MCF 10A (cell line): ENCODE measurements at regions of chr1 and their contacts with region 1.

Region 1: DNA sequence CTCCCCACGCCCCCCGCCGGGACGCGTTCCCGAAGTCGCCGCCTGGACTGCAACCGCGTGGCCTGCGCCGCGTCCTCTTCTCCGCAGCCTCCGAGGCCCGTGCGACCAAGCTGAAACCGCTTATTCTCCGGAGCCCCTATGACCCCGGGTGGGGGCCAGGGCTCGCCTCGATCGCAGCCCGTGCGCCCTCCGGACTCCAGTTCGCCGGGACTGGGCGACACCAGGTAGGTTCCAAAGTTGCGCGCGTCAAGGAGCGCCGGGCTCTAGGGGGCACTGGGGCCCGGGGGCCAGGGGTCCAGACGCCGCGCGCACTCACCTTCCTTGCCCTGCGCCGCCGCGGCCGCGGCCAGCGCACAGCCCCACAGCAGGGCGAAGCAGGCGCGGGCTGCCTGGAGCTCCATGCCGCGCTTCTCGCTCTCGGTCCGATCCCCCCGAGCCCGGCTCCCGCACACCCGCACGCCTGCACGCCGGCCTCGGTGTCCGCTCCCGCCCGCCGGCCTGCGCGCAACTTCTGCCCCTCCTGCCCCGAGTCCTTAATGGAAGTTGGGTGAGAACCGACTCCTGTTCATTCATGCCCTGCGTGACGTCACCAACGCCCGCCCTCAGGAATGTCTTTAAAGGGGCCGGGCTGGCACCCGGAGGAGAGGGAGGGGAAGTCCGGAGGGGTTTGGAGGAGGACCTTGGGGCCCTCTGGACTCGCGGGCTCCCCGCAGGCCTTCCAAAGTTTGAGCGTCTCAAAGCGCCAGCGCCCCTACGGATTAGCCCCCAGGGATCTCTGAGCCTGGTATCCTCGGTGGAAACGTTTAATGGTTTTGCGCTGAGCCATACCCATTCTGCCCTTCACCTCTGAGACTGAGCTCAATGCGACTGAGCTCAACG is at the start of gene EPHA2:
- DNase-seq: peak; percentile 96
- H3K4me3 Mint-ChIP-seq: peak within 1 kb of the TSS; percentile 87
- H3K27ac Mint-ChIP-seq: peak within 1 kb of the TSS; percentile 63
- H3K4me1 Mint-ChIP-seq: peaks cover 42% of the 10 kb centered on the region
- H3K27me3 Mint-ChIP-seq: no peaks in the 10 kb centered on the region
- CTCF ChIP-seq: no peak
- total RNA-seq, gene EPHA2: 206 and 248 TPM in 2 replicates

Region 2: DNA sequence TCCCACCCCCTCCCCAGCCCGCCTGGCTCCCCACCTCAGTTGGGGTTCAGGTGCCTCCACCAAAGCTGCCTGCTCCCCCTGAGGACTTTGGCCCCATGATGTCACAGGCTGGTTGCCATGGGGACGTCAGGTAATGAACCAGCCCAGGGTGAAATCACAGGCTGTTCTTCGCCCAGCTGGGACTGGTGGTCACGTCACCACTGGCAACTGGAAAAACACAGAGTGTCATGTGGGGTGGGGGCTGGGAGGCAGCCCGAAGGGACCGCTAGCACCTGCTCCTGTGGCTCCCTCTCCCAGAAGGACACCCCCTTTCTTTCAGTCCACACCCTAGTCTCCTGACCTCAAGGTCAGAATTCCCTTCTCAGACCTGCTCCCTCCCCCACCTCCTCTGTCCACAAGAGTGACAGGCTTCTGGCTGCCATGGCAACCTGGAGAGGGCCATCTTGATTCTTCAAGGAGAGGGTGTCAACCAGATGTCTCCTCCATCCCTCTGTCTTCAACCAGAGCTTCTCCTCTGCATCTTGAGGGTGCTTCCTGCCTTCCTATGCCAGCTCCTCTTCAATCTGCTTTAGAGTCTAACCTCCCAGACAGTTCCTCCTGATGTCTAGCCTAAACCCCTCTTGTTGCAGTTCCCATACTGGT is 88.5 kb before region 1 on chr1:
- CTCF ChIA-PET with region 1: no interaction called
- POLR2A ChIA-PET with region 1: no interaction called
- intact Hi-C with region 1: no loop called
- DNase-seq: no peak
- H3K4me3 Mint-ChIP-seq: no peak overlapping the region
- H3K27ac Mint-ChIP-seq: peak overlapping the region; percentile 39
- H3K4me1 Mint-ChIP-seq: peaks cover 6% of the 10 kb centered on the region
- H3K27me3 Mint-ChIP-seq: peaks cover 16% of the 10 kb centered on the region
- CTCF ChIP-seq: no peak

Region 3: DNA sequence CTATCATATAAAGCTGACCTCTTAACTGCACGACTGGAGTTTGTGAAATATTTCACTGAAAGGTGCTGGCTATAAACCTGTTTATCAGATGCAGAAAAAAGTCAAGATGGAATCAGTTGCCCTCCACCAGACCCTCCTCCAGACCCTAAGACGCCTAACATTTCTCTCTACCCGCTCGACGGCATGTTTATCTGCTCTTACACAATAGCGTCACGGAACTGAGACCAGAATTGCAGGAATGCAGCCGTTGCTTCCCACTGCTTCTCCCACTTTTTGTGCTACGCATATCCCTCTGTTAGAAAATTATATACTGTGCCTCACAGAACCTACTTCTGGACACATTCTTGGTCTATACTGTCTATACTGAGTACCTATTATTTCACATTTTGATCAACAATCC is 54.1 kb before region 1 on chr1:
- CTCF ChIA-PET with region 1: no interaction called
- POLR2A ChIA-PET with region 1: interaction called, 10 read pairs
- intact Hi-C with region 1: no loop called
- DNase-seq: no peak
- H3K4me3 Mint-ChIP-seq: no peak overlapping the region
- H3K27ac Mint-ChIP-seq: no peak overlapping the region
- H3K4me1 Mint-ChIP-seq: no peaks in the 10 kb centered on the region
- H3K27me3 Mint-ChIP-seq: peaks cover 4% of the 10 kb centered on the region
- CTCF ChIP-seq: no peak

Region 4: DNA sequence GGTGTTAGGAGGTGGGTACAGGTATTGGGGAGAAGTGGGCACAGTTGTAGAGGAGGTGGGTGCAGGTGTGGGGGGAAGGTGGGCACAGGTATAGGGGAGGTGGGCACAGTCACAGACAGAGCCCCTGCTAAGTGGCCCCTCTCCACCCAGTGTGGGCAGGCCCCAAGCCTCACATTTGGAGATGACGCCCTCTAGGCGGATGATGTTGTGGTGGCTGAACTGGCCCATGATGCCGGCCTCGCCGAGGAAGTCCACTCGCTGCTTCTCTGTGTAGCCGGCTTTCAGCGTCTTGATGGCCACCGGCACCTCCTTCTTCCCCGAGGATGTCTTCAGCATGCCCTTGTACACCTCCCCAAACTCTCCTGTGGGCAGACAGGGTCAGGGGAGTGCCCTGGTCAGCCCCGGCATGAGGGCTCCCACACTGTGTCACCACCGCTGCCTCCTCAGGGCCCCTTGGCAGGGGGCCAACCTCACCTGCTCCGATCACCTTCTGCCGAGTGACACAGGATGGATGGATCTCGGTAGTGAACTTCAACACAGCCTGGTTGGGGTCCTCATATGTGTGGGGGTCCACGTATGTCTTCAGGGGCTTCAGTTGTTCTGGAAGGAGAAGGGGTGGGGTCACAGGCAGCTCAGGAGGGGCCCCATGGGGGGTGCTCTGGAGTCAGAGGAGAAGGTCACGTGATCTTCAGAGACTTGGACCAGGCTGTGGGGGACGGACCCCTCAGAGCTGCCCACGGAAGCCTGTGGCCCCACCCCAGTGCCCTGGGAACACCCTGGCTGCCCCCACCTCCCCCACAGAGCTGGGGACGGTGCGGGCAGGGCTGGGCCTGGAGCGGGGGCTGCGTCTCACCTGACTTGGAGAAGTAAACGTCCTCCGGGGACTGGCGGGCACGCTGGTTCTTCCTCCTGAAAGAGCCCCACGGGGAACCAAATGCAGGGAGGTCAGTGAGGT is 22.5 kb before region 1 on chr1:
- CTCF ChIA-PET with region 1: interaction called, 10 read pairs
- POLR2A ChIA-PET with region 1: interaction called, 35 read pairs
- intact Hi-C with region 1: no loop called
- DNase-seq: no peak
- H3K4me3 Mint-ChIP-seq: no peak overlapping the region
- H3K27ac Mint-ChIP-seq: no peak overlapping the region
- H3K4me1 Mint-ChIP-seq: peaks cover 9% of the 10 kb centered on the region
- H3K27me3 Mint-ChIP-seq: no peaks in the 10 kb centered on the region
- CTCF ChIP-seq: no peak

Region 5: GRCh38 chr1:16175610-16176553 is 20.1 kb after region 1 on chr1:
- CTCF ChIA-PET with region 1: interaction called, 14 read pairs
- POLR2A ChIA-PET with region 1: interaction called, 153 read pairs
- intact Hi-C with region 1: no loop called
- DNase-seq: peak; percentile 80
- H3K4me3 Mint-ChIP-seq: peak overlapping the region; percentile 6
- H3K27ac Mint-ChIP-seq: peak overlapping the region; percentile 71
- H3K4me1 Mint-ChIP-seq: peaks cover 52% of the 10 kb centered on the region
- H3K27me3 Mint-ChIP-seq: no peaks in the 10 kb centered on the region
- CTCF ChIP-seq: no peak

Region 6: DNA sequence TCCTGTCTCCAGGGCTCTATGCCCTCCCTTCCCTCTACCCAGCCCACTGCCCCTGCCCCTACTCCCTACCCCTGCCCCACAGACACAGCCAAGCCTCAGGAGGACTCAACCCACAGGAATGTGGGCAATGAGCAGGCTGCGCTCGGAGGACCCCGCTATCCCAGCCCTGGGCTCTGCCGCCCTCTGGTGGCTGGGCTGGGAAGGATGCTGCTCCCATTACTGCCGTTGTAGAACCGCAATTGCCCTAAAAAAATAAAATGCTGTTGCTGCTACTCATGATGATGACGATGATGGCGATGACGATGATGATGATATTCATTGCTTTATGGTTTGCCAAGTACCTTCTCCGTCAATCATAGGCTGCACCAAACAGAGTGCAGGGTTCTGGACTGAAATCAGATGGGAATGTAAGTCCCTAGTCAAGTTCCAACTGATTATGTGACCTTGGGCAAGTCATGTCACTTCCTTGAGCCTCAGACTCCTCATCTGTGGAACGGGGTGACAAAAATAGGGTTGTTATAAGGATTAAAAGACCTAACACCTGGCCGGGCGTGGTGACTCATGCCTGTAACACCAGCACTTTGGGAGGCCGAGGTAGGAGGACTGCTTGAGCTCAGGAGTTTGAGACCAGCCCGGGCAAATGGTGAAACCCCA is 32.1 kb after region 1 on chr1:
- CTCF ChIA-PET with region 1: interaction called, 7 read pairs
- POLR2A ChIA-PET with region 1: interaction called, 153 read pairs
- intact Hi-C with region 1: loop called (anchors 1 kb)
- DNase-seq: peak; percentile 82
- H3K4me3 Mint-ChIP-seq: no peak overlapping the region
- H3K27ac Mint-ChIP-seq: no peak overlapping the region
- H3K4me1 Mint-ChIP-seq: peaks cover 38% of the 10 kb centered on the region
- H3K27me3 Mint-ChIP-seq: no peaks in the 10 kb centered on the region
- CTCF ChIP-seq: peak; percentile 98

Region 7: DNA sequence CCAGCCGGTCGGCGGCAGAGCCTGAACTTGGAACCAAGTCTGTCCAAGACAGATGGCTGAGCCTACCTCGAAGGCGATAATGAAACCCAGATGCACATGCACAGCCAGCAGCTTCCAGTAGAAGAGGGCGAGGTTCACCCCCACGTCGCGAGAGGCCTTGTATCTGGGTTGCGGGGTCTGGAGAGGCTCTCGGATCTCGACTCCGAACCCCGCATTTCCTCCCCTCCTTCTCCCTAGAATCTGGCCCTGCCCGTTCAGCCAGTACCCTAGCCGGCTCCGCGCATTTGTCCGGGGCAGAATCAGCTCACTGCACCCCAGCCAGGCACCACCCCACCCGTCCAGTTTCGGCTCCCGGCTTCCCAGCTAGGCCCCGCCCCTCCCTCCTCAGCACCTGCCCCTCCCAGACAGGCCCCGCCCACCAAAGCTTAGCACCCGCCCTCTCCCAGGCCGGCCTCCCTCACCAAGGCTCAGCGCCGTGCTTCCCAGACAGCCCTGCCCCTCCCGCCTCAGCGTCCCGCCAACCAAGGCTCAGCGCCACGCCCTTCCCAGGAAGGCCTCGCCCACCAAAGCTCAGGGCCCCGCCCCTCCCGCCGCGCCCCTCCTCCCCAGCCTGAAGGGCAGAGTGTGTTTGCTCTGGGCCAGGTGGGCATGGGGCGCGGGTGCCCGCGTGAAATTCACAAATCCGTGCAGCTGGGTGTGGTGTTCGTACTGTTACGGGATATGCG is 61.5 kb after region 1 on chr1:
- CTCF ChIA-PET with region 1: no interaction called
- POLR2A ChIA-PET with region 1: no interaction called
- intact Hi-C with region 1: no loop called
- DNase-seq: peak; percentile 96
- H3K4me3 Mint-ChIP-seq: peak overlapping the region; percentile 59
- H3K27ac Mint-ChIP-seq: no peak overlapping the region
- H3K4me1 Mint-ChIP-seq: peaks cover 6% of the 10 kb centered on the region
- H3K27me3 Mint-ChIP-seq: no peaks in the 10 kb centered on the region
- CTCF ChIP-seq: no peak